GM12878 (cell line): ENCODE measurements at regions of chr14 and their contacts with region 1.

Region 1: GRCh38 chr14:22986508-22987054 is 4.2 kb upstream of the AJUBA start:
- DNase-seq: no peak
- ATAC-seq: peak; percentile 90
- H3K4me3 ChIP-seq: no peak overlapping the region
- H3K27ac ChIP-seq: no peak overlapping the region
- H3K4me1 ChIP-seq: no peaks in the 10 kb centered on the region; the same call in 1 of the 2 replicates
- H3K27me3 ChIP-seq: peaks cover 3% of the 10 kb centered on the region in 2 experiments
- CTCF ChIP-seq: peak; percentile 85 to 94 (median 93)
- EP300 ChIP-seq: no peak
- POLR2A ChIP-seq: no peak
- RAD21 ChIP-seq: peak; percentile 95

Region 2: DNA sequence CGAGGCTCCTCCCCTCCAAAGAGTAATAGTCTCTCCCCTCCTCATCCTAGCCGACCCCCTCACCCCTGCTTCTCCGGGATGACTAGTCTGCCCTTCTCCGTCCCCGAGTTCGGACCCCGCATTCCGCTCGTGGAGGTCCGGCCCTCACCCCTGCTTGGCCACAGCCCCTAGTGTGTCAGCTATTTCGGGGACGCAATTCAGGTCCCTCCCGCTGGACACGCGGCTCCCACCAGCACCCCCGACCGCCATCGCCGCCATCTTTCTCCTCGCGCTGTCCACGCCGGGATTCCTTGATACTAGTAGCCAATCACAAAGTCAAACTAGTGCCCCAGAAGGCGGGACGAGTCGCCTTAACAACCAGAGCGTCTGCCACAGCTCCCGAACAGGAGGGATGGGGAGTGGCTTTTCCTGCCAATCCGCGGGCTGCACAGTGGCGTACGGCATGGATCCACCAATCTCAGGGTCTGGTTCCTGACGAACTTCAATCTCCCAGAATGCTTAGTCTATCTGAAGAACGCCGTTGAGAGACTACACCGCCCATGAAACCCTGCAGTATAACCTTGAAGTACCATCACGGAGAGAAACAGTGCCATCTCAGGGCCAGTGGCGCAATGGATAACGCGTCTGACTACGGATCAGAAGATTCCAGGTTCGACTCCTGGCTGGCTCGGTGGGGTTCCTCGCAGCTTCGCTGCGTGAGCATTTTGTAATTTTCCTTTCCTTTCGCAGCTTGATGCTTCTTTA is 57.3 kb before region 1 on chr14 and contains the start of gene PRMT5:
- CTCF ChIA-PET with region 1: interaction called, 82 read pairs
- POLR2A ChIA-PET with region 1: interaction called, 3 read pairs
- RAD21 ChIA-PET with region 1: interaction called, 18 read pairs
- SMC1A ChIA-PET with region 1: interaction called, 17 read pairs
- in situ Hi-C with region 1: no loop called
- intact Hi-C with region 1: loop called (anchors 2 kb)
- DNase-seq: peak; percentile 100
- ATAC-seq: peak; percentile 97
- H3K4me3 ChIP-seq: peak within 1 kb of the TSS; percentile 91
- H3K27ac ChIP-seq: peak within 1 kb of the TSS; percentile 81
- H3K4me1 ChIP-seq: peaks cover 16% of the 10 kb centered on the region; the same call in 1 of the 2 replicates
- H3K27me3 ChIP-seq: no peaks in the 10 kb centered on the region
- CTCF ChIP-seq: peak in 1 of 3 experiments; percentile 7; a peak in 1 of 6 replicates
- EP300 ChIP-seq: no peak
- POLR2A ChIP-seq: peak; percentile 97
- RAD21 ChIP-seq: no peak
- polyA plus RNA-seq, gene PRMT5: 54.3 to 71.6 TPM

Region 3: GRCh38 chr14:22973217-22974032 is 13.2 kb before region 1 on chr14:
- CTCF ChIA-PET with region 1: interaction called, 370 read pairs
- POLR2A ChIA-PET with region 1: interaction called, 17 read pairs
- RAD21 ChIA-PET with region 1: interaction called, 110 read pairs
- SMC1A ChIA-PET with region 1: interaction called, 62 read pairs
- in situ Hi-C with region 1: no loop called
- intact Hi-C with region 1: loop called (anchors 1 kb)
- DNase-seq: no peak
- ATAC-seq: peak; percentile 85
- H3K4me3 ChIP-seq: no peak overlapping the region
- H3K27ac ChIP-seq: no peak overlapping the region
- H3K4me1 ChIP-seq: no peaks in the 10 kb centered on the region
- H3K27me3 ChIP-seq: no peaks in the 10 kb centered on the region
- CTCF ChIP-seq: peak; percentile 65 to 82 (median 70)
- EP300 ChIP-seq: no peak
- POLR2A ChIP-seq: no peak
- RAD21 ChIP-seq: peak; percentile 61

Region 4: GRCh38 chr14:23006544-23007419 is 20.2 kb after region 1 on chr14:
- CTCF ChIA-PET with region 1: interaction called, 108 read pairs
- POLR2A ChIA-PET with region 1: interaction called, 11 read pairs
- RAD21 ChIA-PET with region 1: interaction called, 27 read pairs
- SMC1A ChIA-PET with region 1: interaction called, 22 read pairs
- in situ Hi-C with region 1: no loop called
- intact Hi-C with region 1: no loop called
- DNase-seq: peak; percentile 96
- ATAC-seq: peak; percentile 98
- H3K4me3 ChIP-seq: peak overlapping the region; percentile 71
- H3K27ac ChIP-seq: peak overlapping the region; percentile 91
- H3K4me1 ChIP-seq: peaks cover 21% of the 10 kb centered on the region
- H3K27me3 ChIP-seq: no peaks in the 10 kb centered on the region
- CTCF ChIP-seq: peak in 2 of 3 experiments; percentile 26 to 30; a peak in 3 of 6 replicates
- EP300 ChIP-seq: no peak
- POLR2A ChIP-seq: peak; percentile 99
- RAD21 ChIP-seq: no peak

Region 5: DNA sequence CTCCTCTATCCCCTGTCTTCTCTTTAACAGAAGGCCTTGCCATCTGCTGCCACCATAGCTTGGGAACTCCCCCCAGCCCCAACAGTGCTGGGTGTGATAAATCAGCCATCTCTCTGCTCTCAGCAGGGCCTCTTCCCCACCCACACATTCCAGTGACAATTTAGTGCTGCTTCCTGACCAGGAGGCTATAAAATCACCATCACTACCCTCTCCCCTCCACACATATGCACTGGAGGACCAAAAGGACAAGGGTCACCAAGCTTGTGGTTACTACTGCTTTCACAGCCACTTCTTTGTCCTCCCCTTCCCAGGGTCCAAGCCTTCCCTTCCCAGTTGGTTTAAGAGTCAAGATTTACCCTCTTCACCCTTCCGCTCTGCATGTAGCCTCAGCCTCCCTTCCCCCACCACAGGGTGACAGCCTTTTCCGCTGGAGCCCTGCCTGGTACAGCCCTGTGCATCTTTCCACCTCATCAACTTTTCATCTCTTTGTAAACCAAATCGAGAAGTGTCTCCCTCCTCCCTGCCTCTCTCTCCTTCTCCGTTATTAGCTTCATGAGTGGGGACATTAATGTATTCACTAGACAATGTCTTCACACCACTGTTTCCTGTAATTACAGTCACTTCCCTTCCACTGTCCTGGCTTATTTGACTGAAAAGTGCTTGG is 38.7 kb after region 1 on chr14:
- CTCF ChIA-PET with region 1: interaction called, 21 read pairs
- POLR2A ChIA-PET with region 1: no interaction called
- RAD21 ChIA-PET with region 1: interaction called, 5 read pairs
- SMC1A ChIA-PET with region 1: interaction called, 15 read pairs
- in situ Hi-C with region 1: no loop called
- intact Hi-C with region 1: no loop called
- DNase-seq: no peak
- ATAC-seq: peak; percentile 52; the same call in 2 of the 3 replicates
- H3K4me3 ChIP-seq: no peak overlapping the region
- H3K27ac ChIP-seq: no peak overlapping the region
- H3K4me1 ChIP-seq: no peaks in the 10 kb centered on the region
- H3K27me3 ChIP-seq: no peaks in the 10 kb centered on the region
- CTCF ChIP-seq: no peak
- EP300 ChIP-seq: no peak
- POLR2A ChIP-seq: no peak
- RAD21 ChIP-seq: no peak

Region 6: DNA sequence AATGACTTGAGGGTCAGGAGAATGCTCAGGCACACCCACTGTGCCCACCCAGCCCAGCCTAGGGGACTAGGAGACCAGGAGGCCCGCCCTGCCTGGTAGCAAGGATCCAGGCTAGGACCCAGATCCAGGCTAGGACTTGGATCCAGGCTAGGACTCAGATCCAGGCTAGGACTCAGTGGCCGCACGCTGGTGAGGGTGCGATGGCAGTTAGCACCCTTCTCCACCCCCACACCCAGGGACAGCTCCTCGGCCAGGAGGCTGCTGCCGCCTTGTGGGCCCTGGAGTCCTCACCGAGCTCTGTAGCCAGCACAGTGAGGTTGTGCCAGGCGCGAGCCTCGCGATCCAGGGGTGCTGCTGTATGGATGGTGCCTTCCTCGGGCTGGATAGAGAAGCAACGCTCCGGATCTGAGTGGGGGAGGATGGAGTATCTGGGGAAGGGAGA is 65.6 kb after region 1 on chr14:
- CTCF ChIA-PET with region 1: interaction called, 853 read pairs
- POLR2A ChIA-PET with region 1: interaction called, 3 read pairs
- RAD21 ChIA-PET with region 1: interaction called, 224 read pairs
- SMC1A ChIA-PET with region 1: interaction called, 156 read pairs
- in situ Hi-C with region 1: loop called (anchors 5 kb)
- intact Hi-C with region 1: no loop called
- DNase-seq: no peak
- ATAC-seq: no peak
- H3K4me3 ChIP-seq: no peak overlapping the region
- H3K27ac ChIP-seq: no peak overlapping the region
- H3K4me1 ChIP-seq: peaks cover 12% of the 10 kb centered on the region
- H3K27me3 ChIP-seq: no peaks in the 10 kb centered on the region
- CTCF ChIP-seq: peak in 1 of 3 experiments; percentile 8; a peak in 1 of 6 replicates
- EP300 ChIP-seq: no peak
- POLR2A ChIP-seq: no peak
- RAD21 ChIP-seq: no peak

Region 7: DNA sequence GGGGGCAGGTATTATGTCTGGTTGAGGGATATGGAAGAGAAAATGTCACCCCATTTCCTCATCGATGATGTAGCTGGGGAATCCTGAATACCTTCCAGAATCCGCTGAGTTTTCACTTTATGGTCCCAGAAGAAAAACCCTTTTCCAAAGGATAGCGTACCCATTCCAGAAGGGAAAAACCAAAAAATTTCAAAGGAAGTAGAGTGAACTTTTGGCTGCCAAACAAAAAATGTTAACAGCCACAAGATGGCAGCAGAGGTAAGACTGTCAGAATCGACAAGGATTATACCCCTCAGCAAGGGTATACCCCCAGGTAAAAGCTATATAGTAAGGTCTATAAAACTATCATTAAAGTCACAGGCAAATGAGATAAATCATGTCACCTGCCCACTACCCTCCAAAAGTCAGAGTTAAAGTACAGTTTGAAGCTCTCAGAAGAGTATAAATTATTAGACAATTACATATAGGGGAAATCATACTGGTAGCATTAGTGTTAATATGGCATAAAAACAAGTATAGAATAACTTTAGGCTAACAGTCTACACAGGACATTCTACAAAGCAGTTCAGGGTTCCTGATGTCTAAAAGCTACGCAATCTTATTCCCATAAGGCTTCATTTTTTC is 90.3 kb after region 1 on chr14:
- CTCF ChIA-PET with region 1: interaction called, 34 read pairs
- POLR2A ChIA-PET with region 1: interaction called, 3 read pairs
- RAD21 ChIA-PET with region 1: interaction called, 10 read pairs
- SMC1A ChIA-PET with region 1: interaction called, 12 read pairs
- in situ Hi-C with region 1: no loop called
- intact Hi-C with region 1: no loop called
- DNase-seq: no peak
- ATAC-seq: peak; percentile 79
- H3K4me3 ChIP-seq: no peak overlapping the region
- H3K27ac ChIP-seq: no peak overlapping the region
- H3K4me1 ChIP-seq: 0 out of 2 replicates have a peak, but pooled peaks cover 1% of the 10 kb centered on the region
- H3K27me3 ChIP-seq: no peaks in the 10 kb centered on the region
- CTCF ChIP-seq: peak; percentile 49 to 60 (median 59)
- EP300 ChIP-seq: no peak
- POLR2A ChIP-seq: no peak
- RAD21 ChIP-seq: peak; percentile 48; the same call in 1 of the 2 replicates